ENCODE measurements at regions of chr19 and their contacts with region 1.

Region 1: GRCh38 chr19:46487802-46488445 is 7.7 kb downstream of the PNMA8B start:
- DNase-seq: peak; percentile 75 to 90 (median 85)
- H3K4me3 ChIP-seq: peak overlapping the region in 2 of 4 donors; percentile 41 to 42
- H3K27ac ChIP-seq: no peak overlapping the region
- H3K4me1 ChIP-seq: peaks cover 24 to 29% of the 10 kb centered on the region in 2 donors
- H3K27me3 ChIP-seq: no peaks in the 10 kb centered on the region
- CTCF ChIP-seq: peak; percentile 88 to 99 (median 98)
- POLR2A ChIP-seq: no peak

Region 2: DNA sequence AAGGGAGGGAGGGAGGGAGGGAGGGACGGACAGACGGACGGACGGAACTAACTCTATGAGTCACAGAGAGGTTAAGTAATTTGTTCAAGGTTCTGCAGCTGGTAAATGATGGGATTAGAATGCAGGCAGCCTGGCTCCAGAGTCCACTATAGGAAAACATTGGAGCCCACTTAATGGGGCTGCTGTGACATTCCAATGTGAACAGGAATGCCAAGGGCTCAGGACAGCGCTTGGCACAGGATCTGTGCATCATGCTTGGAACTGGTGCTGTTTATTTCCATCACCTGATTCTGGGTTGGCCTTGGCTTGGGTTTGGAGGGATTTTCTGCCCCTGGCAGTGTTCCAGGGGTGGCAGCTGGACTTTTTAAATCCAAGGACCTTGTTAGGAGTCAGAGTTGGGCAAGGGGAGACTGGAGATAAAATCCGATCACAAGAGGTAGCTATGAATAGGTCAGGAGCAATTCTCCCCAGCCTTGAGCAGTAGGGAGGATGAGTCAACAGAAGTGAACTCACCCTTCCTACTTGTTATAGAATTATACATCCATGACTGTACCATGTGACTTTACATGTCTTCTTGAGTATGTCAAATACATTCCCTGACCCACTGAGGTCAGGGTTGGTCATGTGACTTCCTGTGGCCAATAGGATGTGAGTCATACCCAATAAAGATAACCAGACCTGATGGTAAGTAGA is 198.9 kb before region 1 on chr19:
- intact Hi-C with region 1: loop called (anchors 10 kb)
- DNase-seq: peak; percentile 82 to 94 (median 89)
- H3K4me3 ChIP-seq: no peak overlapping the region
- H3K27ac ChIP-seq: peak overlapping the region; percentile 60 to 91 (median 81)
- H3K4me1 ChIP-seq: peaks cover 4 to 11% of the 10 kb centered on the region in 2 donors
- H3K27me3 ChIP-seq: no peaks in the 10 kb centered on the region
- CTCF ChIP-seq: no peak
- POLR2A ChIP-seq: no peak

Region 3: DNA sequence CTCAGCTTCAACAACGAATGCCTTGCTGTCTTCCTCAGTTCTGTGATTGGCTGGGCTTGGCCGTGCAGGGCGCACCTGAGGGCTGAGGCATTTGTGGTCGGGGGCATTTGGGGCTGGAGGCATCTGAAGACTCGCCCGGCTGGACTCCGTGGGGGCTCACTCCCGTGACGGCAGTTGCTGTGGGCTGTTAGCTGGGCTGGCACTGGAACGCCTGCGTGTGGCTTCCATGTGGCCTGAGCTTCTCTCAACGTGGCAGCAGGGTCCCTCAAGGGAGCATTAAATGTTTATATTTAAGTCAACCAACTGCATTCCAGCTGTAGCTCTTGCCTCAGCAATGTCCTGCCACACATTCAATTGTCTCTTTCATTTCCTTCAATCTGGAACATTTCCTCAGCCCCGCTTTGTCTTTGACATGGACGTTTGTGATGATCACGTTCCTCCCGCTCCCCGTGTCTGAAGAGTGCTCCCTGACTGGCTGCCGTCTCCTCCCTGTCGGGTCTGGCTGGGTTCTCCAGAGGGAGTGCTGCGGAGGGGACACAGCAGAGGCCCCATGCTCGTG is 95.6 kb before region 1 on chr19:
- intact Hi-C with region 1: loop called in 1 of 2 experiments (anchors 2 kb)
- DNase-seq: peak in 2 of 7 donors; percentile 15 to 26
- H3K4me3 ChIP-seq: no peak overlapping the region
- H3K27ac ChIP-seq: peak overlapping the region in 2 of 5 donors; percentile 6 to 29
- H3K4me1 ChIP-seq: peaks cover 0 to 7% of the 10 kb centered on the region in 2 donors
- H3K27me3 ChIP-seq: no peaks in the 10 kb centered on the region
- CTCF ChIP-seq: no peak
- POLR2A ChIP-seq: no peak

Region 4: DNA sequence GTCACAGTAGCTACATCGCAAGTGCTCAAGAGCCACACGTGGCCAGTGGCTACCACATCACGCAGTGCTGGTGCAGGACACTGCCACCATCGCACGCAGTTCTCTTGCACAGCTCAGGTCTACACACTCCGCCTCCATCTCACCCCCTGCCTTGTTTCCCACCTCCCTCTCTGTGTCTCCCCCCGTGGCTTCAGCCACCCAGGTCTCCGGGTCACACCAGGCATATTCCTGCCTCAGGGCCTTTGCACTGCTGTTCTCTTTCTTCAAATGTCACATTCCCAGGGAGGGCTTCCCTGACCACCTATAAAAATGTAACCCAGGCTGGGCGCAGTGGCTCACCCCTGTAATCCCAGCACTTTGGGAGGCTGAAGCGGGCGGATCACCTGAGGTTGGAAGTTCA is 85.2 kb before region 1 on chr19:
- intact Hi-C with region 1: loop called (anchors 2 kb)
- DNase-seq: peak in 1 of 7 donors; percentile 17
- H3K4me3 ChIP-seq: no peak overlapping the region
- H3K27ac ChIP-seq: no peak overlapping the region
- H3K4me1 ChIP-seq: peaks cover 0 to 11% of the 10 kb centered on the region in 2 donors
- H3K27me3 ChIP-seq: no peaks in the 10 kb centered on the region
- CTCF ChIP-seq: no peak
- POLR2A ChIP-seq: no peak

Region 5: GRCh38 chr19:46513461-46514236 is 25.7 kb after region 1 on chr19:
- intact Hi-C with region 1: loop called (anchors 2 to 5 kb)
- DNase-seq: peak; percentile 80 to 91 (median 84)
- H3K4me3 ChIP-seq: no peak overlapping the region
- H3K27ac ChIP-seq: no peak overlapping the region
- H3K4me1 ChIP-seq: no peaks in the 10 kb centered on the region
- H3K27me3 ChIP-seq: no peaks in the 10 kb centered on the region
- CTCF ChIP-seq: peak; percentile 98 to 100 (median 99)
- POLR2A ChIP-seq: no peak

Measured in adrenal gland (tissue), 19 donors.